Right cardiac atrium (tissue), 5 donors: ENCODE measurements at regions of chr19 and their contacts with region 1.

Region 1: GRCh38 chr19:41263850-41264580 is at the start of gene HNRNPUL1:
- DNase-seq: peak; percentile 98 to 99 (median 99)
- ATAC-seq: peak; percentile 91
- H3K4me3 ChIP-seq: peak within 1 kb of the TSS; percentile 75
- H3K27ac ChIP-seq: peak within 1 kb of the TSS; percentile 100
- H3K4me1 ChIP-seq: peaks cover 6% of the 10 kb centered on the region
- H3K27me3 ChIP-seq: no peaks in the 10 kb centered on the region
- total RNA-seq, gene HNRNPUL1: 134 to 152 (median 141) TPM

Region 2: GRCh38 chr19:41206926-41207750 is 56.9 kb before region 1 on chr19:
- intact Hi-C with region 1: loop called (anchors 2 to 5 kb)
- DNase-seq: peak; percentile 94 to 97 (median 94)
- ATAC-seq: peak; percentile 89 to 92
- H3K4me3 ChIP-seq: no peak overlapping the region
- H3K27ac ChIP-seq: peak overlapping the region; percentile 37
- H3K4me1 ChIP-seq: no peaks in the 10 kb centered on the region
- H3K27me3 ChIP-seq: no peaks in the 10 kb centered on the region

Region 3: GRCh38 chr19:41218615-41219507 is 45.2 kb before region 1 on chr19 and contains the start of gene AXL:
- intact Hi-C with region 1: loop called in 2 of 4 experiments (anchors 2 to 5 kb)
- DNase-seq: peak; percentile 85 to 96 (median 95)
- ATAC-seq: peak; percentile 81 to 88
- H3K4me3 ChIP-seq: peak within 1 kb of the TSS; percentile 60
- H3K27ac ChIP-seq: peak within 1 kb of the TSS; percentile 68
- H3K4me1 ChIP-seq: peaks cover 2% of the 10 kb centered on the region
- H3K27me3 ChIP-seq: no peaks in the 10 kb centered on the region
- total RNA-seq, gene AXL: 30.2 to 43.6 (median 38.5) TPM

Region 4: DNA sequence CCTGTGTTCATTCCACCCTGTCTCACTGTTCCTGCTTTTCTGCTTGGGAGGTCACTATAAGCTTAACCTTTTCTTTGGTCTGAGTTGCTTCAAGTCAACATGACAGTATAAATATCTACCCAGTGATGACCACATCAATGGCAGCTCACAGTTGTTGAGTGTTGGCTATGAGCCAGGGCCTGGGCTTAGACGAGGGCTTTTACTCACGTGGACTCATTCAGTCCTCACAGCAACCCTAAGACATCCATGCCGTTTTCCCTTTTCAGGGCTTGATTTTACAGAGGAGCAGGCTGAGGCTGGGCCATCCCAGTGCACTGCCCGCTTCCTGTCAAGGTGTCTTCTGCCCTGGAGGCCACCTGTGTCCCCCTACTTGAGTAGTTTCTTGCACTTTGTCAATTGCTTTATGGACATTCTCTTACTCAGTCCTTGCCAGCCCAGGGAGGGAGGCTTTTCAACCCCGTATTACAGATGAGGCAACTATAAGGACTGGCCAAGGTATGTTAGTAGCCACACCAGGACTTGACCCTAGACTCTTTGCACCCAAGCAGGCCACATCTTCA is 35.8 kb after region 1 on chr19:
- intact Hi-C with region 1: loop called in 3 of 4 experiments (anchors 5 kb)
- DNase-seq: peak; percentile 79 to 88 (median 87)
- ATAC-seq: peak; percentile 56 to 69
- H3K4me3 ChIP-seq: no peak overlapping the region
- H3K27ac ChIP-seq: peak overlapping the region; percentile 96
- H3K4me1 ChIP-seq: peaks cover 41% of the 10 kb centered on the region
- H3K27me3 ChIP-seq: no peaks in the 10 kb centered on the region

Region 5: GRCh38 chr19:41308392-41309179 is 44.6 kb after region 1 on chr19:
- intact Hi-C with region 1: loop called in 3 of 4 experiments (anchors 5 kb)
- DNase-seq: peak; percentile 91 to 97 (median 96)
- ATAC-seq: peak; percentile 61 to 74
- H3K4me3 ChIP-seq: no peak overlapping the region
- H3K27ac ChIP-seq: peak overlapping the region; percentile 90
- H3K4me1 ChIP-seq: peaks cover 8% of the 10 kb centered on the region
- H3K27me3 ChIP-seq: no peaks in the 10 kb centered on the region